HCT116 (cell line): ENCODE measurements at regions of chr4 and their contacts with region 1.

Region 1: DNA sequence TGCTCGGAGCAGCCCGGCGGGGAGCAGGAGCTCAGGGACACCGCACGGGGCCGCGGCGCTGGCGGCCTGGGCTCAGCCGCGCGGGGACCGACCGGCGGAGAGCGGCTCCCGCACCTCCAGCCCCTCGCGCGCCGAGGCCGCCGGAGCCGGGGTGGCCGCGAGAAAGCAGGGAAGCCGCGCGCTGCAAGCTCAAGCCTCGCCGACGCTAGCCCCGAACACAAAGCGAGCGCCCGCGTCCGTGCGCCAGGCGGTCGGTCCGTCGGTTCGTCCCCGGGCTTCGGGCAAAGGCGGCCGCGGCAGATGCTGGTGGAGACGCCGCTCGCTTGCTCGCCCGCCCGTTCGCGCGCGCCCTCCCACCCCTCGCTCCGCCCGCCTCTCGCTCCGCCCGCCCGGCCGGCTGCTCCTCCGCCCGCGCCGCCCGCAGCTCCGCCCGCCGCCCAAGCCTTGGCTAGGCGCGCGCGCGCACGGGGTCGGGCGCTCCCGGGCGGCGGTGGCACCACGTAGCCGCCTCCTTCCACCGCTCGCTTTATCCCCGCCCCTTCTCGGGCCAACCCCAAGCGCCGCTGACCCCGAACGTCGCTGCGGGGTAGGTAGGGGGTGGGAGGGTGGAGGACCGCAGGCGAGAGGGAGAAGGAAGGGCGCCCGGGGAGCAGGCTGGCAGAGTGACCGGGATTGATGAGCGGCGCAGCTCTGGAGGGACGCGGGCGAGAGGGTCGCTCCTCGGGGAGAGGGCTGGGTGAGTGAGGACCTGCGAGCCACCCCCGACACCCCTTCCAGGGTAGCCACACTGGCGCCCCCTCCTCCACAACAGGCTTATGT is at the start of gene TSPAN5:
- DNase-seq: peak; percentile 64
- ATAC-seq: peak; percentile 83
- H3K4me3 ChIP-seq: peak within 1 kb of the TSS; percentile 85 to 89
- H3K27ac ChIP-seq: peak within 1 kb of the TSS; percentile 78
- H3K4me1 ChIP-seq: peaks cover 63 to 83% of the 10 kb centered on the region in 2 experiments
- H3K27me3 ChIP-seq: no peaks in the 10 kb centered on the region
- CTCF ChIP-seq: no peak
- POLR2A ChIP-seq: no peak
- RAD21 ChIP-seq: no peak
- total RNA-seq, gene TSPAN5: 56.8 TPM

Region 2: GRCh38 chr4:98143001-98143899 is 515.2 kb before region 1 on chr4 and contains the start of gene STPG2:
- CTCF ChIA-PET with region 1: no interaction called
- POLR2A ChIA-PET with region 1: no interaction called
- RAD21 ChIA-PET with region 1: no interaction called
- intact Hi-C with region 1: loop called (anchors 5 kb)
- DNase-seq: peak; percentile 83
- ATAC-seq: peak; percentile 98
- H3K4me3 ChIP-seq: peak within 1 kb of the TSS; percentile 59 to 73
- H3K27ac ChIP-seq: peak within 1 kb of the TSS; percentile 83
- H3K4me1 ChIP-seq: peaks cover 10 to 20% of the 10 kb centered on the region in 2 experiments
- H3K27me3 ChIP-seq: no peaks in the 10 kb centered on the region
- CTCF ChIP-seq: peak; percentile 60 to 73 (median 68); a peak in 5 of 6 replicates
- POLR2A ChIP-seq: peak; percentile 9
- RAD21 ChIP-seq: peak; percentile 39
- total RNA-seq, gene STPG2: not detected

Region 3: GRCh38 chr4:98510757-98511517 is 147.6 kb before region 1 on chr4:
- CTCF ChIA-PET with region 1: interaction called, 3 read pairs
- POLR2A ChIA-PET with region 1: no interaction called
- RAD21 ChIA-PET with region 1: no interaction called
- intact Hi-C with region 1: loop called (anchors 5 kb)
- DNase-seq: no peak
- ATAC-seq: no peak
- H3K4me3 ChIP-seq: no peak overlapping the region
- H3K27ac ChIP-seq: no peak overlapping the region
- H3K4me1 ChIP-seq: peaks cover 24 to 61% of the 10 kb centered on the region in 2 experiments; a peak in 3 of 4 replicates
- H3K27me3 ChIP-seq: no peaks in the 10 kb centered on the region
- CTCF ChIP-seq: no peak
- POLR2A ChIP-seq: no peak
- RAD21 ChIP-seq: no peak

Region 4: DNA sequence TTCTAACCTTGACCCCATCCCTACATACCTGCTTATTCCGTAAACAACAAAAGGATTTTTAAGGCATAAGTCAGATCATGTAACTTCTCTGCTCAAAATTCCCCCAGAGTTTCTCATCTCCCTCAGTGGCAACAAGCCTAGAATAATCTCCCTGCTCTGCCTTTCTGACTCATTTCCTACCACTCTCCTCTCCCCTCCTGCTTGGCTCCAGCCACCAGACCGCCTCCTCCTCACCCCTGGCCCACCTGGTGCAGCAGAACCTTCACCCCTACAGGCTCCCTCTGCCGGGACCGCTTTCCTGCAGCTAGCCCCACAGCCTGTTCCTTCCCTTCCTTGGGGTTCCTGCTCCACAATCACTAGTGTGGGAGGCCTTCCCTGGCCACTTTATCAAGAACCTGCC is 32.1 kb before region 1 on chr4:
- CTCF ChIA-PET with region 1: no interaction called
- POLR2A ChIA-PET with region 1: interaction called, 4 read pairs
- RAD21 ChIA-PET with region 1: interaction called in 1 of 2 experiments, 3 read pairs
- intact Hi-C with region 1: loop called (anchors 2 kb)
- DNase-seq: peak; percentile 92
- ATAC-seq: peak; percentile 86
- H3K4me3 ChIP-seq: peak overlapping the region in 1 of 2 experiments; percentile 37; a peak in 2 of 4 replicates
- H3K27ac ChIP-seq: peak overlapping the region; percentile 87
- H3K4me1 ChIP-seq: peaks cover 78 to 97% of the 10 kb centered on the region in 2 experiments
- H3K27me3 ChIP-seq: no peaks in the 10 kb centered on the region
- CTCF ChIP-seq: peak in 2 of 3 experiments; percentile 14 to 24; a peak in 1 of 6 replicates
- POLR2A ChIP-seq: no peak
- RAD21 ChIP-seq: peak; percentile 41; the same call in 1 of the 2 replicates

Region 5: DNA sequence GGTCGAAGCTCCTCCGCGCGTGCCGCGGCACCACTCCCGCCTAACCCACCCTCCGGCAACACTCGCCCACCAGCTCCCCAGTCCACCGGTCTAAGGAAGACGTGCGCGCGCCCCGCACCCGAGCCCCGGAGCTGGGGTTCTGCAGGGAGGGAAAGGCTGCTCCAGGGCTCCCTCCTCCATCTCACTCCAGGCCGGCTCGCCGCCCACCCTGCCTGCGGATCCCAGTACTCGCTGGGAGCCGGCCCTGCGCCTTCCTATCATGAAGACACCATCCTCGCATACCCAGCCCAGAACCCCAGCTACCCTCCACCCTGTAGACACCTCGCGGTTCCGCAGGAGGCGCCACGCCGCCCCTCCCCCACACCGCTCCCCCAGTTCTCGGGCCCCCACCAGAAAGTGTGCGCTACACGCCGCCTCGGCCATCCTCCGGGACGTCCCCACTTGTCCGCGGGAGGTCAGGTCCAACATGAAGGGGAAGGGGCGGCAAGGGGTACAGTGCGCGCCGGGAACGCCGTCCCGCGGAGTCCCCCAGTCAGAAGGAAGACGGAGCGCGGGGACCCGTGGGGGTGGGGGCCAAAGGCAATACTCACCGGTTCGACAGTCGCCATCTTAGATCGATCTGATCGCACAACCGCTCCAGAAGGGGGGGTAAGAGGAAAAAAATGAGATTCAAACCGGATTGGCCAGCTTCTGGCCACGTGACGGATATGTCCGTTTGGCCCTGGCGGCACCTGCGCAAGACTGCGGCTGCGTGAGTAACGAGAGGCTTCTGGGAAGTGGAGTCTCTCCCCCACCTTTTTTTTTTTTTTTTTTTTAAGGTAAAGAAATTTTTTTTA is 270.2 kb after region 1 on chr4 and contains the start of gene EIF4E:
- CTCF ChIA-PET with region 1: no interaction called
- POLR2A ChIA-PET with region 1: interaction called, 3 read pairs
- RAD21 ChIA-PET with region 1: no interaction called
- intact Hi-C with region 1: loop called (anchors 5 kb)
- DNase-seq: peak; percentile 99
- ATAC-seq: peak; percentile 73
- H3K4me3 ChIP-seq: peak within 1 kb of the TSS; percentile 90 to 93
- H3K27ac ChIP-seq: peak within 1 kb of the TSS; percentile 95
- H3K4me1 ChIP-seq: peaks cover 14 to 29% of the 10 kb centered on the region in 2 experiments
- H3K27me3 ChIP-seq: no peaks in the 10 kb centered on the region
- CTCF ChIP-seq: peak in 2 of 3 experiments; percentile 19 to 24; a peak in 2 of 6 replicates
- POLR2A ChIP-seq: peak; percentile 32
- RAD21 ChIP-seq: no peak
- total RNA-seq, gene EIF4E: 148 TPM